PC-3 (cell line): ENCODE measurements at regions of chr1 and their contacts with region 1.

Region 1: GRCh38 chr1:63442141-63442475 is 74.7 kb downstream of the ALG6 start:
- DNase-seq: peak; percentile 28
- ATAC-seq: peak; percentile 39
- H3K4me3 ChIP-seq: no peak overlapping the region
- H3K27ac ChIP-seq: no peak overlapping the region
- H3K4me1 ChIP-seq: no peaks in the 10 kb centered on the region
- H3K27me3 ChIP-seq: no peaks in the 10 kb centered on the region
- CTCF ChIP-seq: no peak

Region 2: DNA sequence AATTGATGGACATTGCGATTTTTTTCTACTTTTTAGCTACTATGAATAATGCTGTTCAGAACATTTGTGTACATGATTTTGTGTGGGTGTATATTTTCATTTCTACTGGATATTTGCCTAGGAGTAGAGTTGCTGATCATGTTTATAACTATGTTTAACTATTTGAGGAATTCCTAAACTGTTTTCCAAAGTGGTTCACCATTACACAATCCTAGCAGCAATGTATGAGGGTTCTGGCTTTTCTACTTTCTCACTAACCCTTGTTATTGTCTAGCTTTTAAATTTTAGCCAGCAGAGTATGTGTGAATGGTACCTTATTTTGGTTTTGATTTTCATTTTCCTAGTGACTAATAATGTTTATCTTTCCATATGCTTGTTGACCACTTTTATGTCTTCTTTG is 572.0 kb before region 1 on chr1:
- CTCF ChIA-PET with region 1: no interaction called
- POLR2A ChIA-PET with region 1: interaction called, 16 read pairs
- intact Hi-C with region 1: no loop called
- DNase-seq: no peak
- ATAC-seq: no peak
- H3K4me3 ChIP-seq: no peak overlapping the region
- H3K27ac ChIP-seq: no peak overlapping the region
- H3K4me1 ChIP-seq: no peaks in the 10 kb centered on the region
- H3K27me3 ChIP-seq: no peaks in the 10 kb centered on the region
- CTCF ChIP-seq: no peak

Region 3: DNA sequence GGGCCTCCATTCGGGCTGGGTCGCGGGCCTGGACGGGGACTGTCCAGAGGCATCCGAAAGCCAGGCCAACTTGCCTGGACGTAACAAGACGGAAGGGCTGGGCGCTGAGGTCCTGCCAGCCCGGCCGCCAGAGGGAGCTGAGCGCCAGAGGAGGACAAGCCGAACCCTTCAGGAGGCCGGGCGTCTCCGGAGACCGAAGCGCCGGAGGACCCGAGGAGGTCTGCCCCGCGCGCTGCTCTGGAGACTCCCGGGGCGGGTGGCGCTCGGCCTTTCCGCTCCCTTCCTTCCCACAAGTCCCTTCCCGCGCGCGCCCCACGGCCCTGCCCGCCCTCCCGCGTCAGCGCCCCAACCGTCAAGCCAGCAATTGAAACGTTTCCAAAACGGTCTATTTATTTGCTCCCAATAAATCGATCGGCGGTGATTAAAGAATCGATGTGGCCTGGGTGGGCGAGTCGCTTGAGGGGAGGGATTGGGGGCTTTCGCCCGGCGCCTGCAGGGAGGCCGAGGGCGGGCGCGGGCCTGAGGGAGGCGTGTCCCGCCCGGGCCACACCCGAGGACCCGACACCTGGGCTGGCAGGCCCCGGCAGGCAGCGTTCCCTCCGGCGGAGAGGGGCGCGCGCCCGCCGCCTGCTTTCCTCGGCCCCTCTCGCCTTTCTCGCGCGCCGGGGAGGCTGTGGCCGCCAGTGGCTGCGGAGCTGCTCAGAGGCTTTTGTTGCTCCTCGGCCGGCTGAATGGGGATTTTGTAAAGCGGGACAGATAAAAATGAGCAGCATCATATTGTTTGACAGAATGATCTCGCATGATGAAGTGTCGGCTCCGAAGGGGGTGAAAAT is 124.9 kb before region 1 on chr1:
- CTCF ChIA-PET with region 1: no interaction called
- POLR2A ChIA-PET with region 1: no interaction called
- intact Hi-C with region 1: loop called (anchors 1 kb)
- DNase-seq: peak; percentile 91
- ATAC-seq: peak; percentile 90
- H3K4me3 ChIP-seq: peak overlapping the region; percentile 79
- H3K27ac ChIP-seq: peak overlapping the region; percentile 52
- H3K4me1 ChIP-seq: peaks cover 10% of the 10 kb centered on the region; the same call in 1 of the 2 replicates
- H3K27me3 ChIP-seq: no peaks in the 10 kb centered on the region
- CTCF ChIP-seq: peak; percentile 72

Region 4: DNA sequence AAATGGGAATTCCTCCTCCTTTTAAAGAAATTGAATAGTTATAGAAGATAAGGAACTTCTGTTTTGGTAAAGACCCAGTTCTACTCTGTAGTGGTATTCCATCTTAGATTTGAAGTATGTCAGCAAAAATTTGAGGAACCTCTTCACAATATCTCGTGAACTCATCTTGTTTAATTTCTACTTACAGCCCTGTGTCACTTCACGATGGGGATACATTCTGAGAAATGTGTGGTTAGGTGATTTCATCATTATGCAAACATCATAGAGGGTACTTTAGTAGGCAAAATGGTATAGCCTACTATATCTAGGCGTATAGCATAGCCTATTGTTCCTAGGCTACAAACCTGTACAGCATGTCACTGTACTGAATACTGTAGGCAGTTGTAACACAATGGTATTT is 38.7 kb before region 1 on chr1:
- CTCF ChIA-PET with region 1: no interaction called
- POLR2A ChIA-PET with region 1: no interaction called
- intact Hi-C with region 1: no loop called
- DNase-seq: peak; percentile 72
- ATAC-seq: peak; percentile 95
- H3K4me3 ChIP-seq: no peak overlapping the region
- H3K27ac ChIP-seq: no peak overlapping the region
- H3K4me1 ChIP-seq: peaks cover 27% of the 10 kb centered on the region
- H3K27me3 ChIP-seq: no peaks in the 10 kb centered on the region
- CTCF ChIP-seq: no peak